Panc1 (cell line): ENCODE measurements at regions of chr4 and their contacts with region 1.

Region 1: GRCh38 chr4:47933840-47934239 is 19.5 kb upstream of the NFXL1 start:
- DNase-seq: no peak
- ATAC-seq: no peak
- H3K4me3 ChIP-seq: no peak overlapping the region
- H3K27ac ChIP-seq: no peak overlapping the region
- H3K4me1 ChIP-seq: no peaks in the 10 kb centered on the region
- H3K27me3 ChIP-seq: 0 out of 2 replicates have a peak, but pooled peaks cover 2% of the 10 kb centered on the region
- CTCF ChIP-seq: peak; percentile 50; the same call in 1 of the 2 replicates

Region 2: GRCh38 chr4:47617607-47618006 is 316.2 kb before region 1 on chr4:
- CTCF ChIA-PET with region 1: no interaction called
- POLR2A ChIA-PET with region 1: no interaction called
- in situ Hi-C with region 1: no loop called
- intact Hi-C with region 1: no loop called
- DNase-seq: no peak
- ATAC-seq: no peak
- H3K4me3 ChIP-seq: no peak overlapping the region
- H3K27ac ChIP-seq: no peak overlapping the region
- H3K4me1 ChIP-seq: no peaks in the 10 kb centered on the region
- H3K27me3 ChIP-seq: no peaks in the 10 kb centered on the region
- CTCF ChIP-seq: no peak

Region 3: GRCh38 chr4:47668810-47669408 is 264.9 kb before region 1 on chr4:
- CTCF ChIA-PET with region 1: interaction called, 3 read pairs
- POLR2A ChIA-PET with region 1: no interaction called
- in situ Hi-C with region 1: no loop called
- intact Hi-C with region 1: loop called (anchors 5 kb)
- DNase-seq: peak; percentile 12
- ATAC-seq: peak; percentile 87
- H3K4me3 ChIP-seq: no peak overlapping the region
- H3K27ac ChIP-seq: no peak overlapping the region
- H3K4me1 ChIP-seq: no peaks in the 10 kb centered on the region
- H3K27me3 ChIP-seq: no peaks in the 10 kb centered on the region
- CTCF ChIP-seq: peak; percentile 69; the same call in 1 of the 2 replicates

Region 4: DNA sequence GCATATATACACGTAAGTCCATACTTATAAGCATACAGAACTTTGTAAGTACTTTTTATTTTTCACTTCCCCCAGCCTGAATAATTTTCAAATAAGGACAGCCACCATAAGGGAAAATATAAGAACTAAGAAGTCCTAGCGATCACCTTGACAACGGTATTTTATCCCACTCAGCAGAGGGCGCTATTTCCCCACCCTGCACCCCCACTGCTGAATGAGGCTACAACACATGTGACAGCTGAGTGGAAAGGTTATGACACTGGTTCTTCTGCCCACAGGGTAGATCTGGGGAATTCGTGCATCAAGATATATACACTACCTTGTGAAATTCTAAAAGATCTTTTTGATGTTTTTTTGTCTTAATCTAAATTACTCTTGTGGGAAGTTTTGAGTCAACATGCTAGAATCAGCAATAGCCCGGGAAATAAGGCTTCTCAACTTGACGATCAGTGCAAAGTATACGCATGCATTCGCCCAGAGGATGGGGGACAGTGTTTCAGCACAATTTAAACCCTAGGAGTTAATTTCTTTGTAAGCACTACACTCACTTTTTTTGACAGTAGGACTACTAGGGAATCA is 247.5 kb before region 1 on chr4:
- CTCF ChIA-PET with region 1: no interaction called
- POLR2A ChIA-PET with region 1: no interaction called
- in situ Hi-C with region 1: no loop called
- intact Hi-C with region 1: loop called (anchors 5 kb)
- DNase-seq: no peak
- ATAC-seq: peak; percentile 71; the same call in 1 of the 2 replicates
- H3K4me3 ChIP-seq: no peak overlapping the region
- H3K27ac ChIP-seq: no peak overlapping the region
- H3K4me1 ChIP-seq: no peaks in the 10 kb centered on the region
- H3K27me3 ChIP-seq: peaks cover 2% of the 10 kb centered on the region; the same call in 1 of the 2 replicates
- CTCF ChIP-seq: peak; percentile 82